Astrocyte of the cerebellum (primary cell): ENCODE measurements at regions of chr16 and their contacts with region 1.

Region 1: DNA sequence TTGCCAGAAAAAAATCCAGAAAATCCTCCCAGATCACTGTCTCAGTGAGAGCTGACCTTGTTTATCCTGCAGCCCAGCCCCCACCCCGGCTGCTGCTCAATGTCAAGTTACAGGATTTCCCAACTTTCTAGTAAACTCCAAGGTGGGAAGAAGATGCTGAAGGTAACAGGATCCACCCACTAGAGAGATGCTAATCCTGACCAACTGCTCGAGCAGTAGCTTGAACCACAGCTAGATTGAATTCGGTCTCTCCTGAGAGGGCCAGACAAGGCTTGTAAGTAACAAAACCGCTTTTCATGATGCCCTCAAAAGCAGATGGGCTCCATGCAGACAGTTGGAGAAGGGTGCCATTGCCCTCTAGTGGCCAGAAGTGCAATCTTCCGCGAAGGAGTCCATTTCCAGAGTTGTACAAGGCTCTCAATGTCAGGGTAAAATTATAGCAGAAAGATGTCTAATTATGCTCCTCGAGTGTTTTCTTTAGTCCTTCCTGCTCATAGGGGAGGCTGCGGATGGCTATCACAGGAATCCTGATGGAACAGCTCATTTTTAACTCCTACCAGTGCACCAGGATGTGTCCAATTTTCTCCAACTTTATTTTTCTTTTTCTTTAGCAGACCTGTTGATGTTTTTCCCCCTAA is 3.9 kb downstream of the CDH11 start:
- DNase-seq: peak; percentile 71
- H3K4me3 ChIP-seq: peak overlapping the region; percentile 92
- CTCF ChIP-seq: peak; percentile 95

Region 2: DNA sequence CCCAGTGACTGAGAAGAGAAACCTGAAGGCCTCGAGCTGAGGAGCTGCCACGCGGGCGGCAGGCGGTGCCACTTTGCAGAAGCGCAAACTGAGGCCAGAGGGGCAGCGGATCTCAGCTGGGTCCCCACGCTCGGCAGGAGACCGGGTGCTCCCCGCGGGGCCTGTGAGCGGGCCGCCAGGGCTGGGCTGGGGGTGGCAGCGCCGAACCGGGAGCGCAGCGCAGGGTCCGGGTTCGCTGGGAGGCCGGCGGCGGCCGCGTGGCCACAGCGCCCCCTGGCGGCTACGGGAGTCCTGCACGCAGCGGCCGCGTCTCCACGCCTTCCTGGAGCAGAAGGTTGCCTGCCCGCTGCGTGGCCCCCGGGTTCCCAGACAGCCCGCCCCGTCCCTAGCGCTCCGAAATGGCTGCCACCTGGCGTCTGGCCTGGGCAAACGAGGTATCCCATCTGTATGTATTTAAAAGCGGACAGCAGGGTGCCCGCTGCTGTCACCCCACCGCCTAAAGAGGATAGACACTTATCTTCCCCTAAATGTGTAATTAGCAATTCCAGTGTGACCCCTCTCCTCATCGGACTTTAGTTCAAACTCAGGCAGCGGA is 1152.5 kb after region 1 on chr16:
- in situ Hi-C with region 1: loop called (anchors 25 kb)
- DNase-seq: no peak
- H3K4me3 ChIP-seq: no peak overlapping the region
- CTCF ChIP-seq: peak; percentile 71